Activated CD4-positive, alpha-beta memory T cell treated with anti-CD3 and anti-CD28 coated beads, Interleukin-2, amount 10 ng/mL, durations not matched to agents 7 days and 5 days (primary cell): ENCODE measurements at regions of chr6 and their contacts with region 1.

Region 1: DNA sequence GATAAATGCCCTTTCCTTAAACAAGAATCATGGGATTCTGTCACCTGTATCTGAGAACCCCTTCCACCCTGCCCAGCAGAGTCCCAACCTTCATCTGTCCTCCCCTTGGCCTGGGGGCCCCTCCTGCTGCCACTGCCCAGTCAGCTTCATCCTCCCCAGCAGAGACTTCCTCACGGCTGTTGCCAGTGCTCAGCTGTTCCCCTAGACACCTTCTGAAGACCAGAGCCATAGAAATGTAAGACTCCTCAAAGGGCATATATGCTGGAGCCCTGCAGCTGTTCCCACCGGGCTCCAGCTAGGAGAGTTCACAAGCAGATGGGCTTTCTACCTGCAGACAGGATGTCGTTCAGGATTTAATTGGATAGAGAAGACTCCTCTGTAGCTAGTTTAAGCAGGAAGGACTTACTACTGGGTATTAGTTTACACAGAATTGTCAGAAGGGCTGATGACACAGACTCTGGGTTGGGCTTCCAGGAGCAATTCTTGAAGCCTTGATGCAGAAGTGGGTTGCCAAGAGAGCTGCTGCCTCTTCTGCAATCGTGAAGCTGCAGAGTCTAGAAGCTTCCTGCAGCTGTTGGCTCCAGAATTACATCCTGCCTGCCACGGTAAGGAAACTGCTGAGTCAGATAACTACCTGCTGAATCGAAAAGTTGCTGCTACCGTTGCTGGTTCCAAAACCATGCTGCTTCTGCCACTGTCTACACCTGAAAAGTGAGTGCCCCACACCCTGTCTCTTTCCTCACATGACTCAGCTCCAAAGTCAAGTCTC is 57.1 kb upstream of the MLN start:
- DNase-seq: peak; percentile 71
- H3K4me3 Mint-ChIP-seq: no peak overlapping the region
- H3K27ac Mint-ChIP-seq: peak overlapping the region; percentile 80
- H3K4me1 Mint-ChIP-seq: peaks cover 73% of the 10 kb centered on the region
- H3K27me3 Mint-ChIP-seq: peaks cover 36% of the 10 kb centered on the region

Region 2: DNA sequence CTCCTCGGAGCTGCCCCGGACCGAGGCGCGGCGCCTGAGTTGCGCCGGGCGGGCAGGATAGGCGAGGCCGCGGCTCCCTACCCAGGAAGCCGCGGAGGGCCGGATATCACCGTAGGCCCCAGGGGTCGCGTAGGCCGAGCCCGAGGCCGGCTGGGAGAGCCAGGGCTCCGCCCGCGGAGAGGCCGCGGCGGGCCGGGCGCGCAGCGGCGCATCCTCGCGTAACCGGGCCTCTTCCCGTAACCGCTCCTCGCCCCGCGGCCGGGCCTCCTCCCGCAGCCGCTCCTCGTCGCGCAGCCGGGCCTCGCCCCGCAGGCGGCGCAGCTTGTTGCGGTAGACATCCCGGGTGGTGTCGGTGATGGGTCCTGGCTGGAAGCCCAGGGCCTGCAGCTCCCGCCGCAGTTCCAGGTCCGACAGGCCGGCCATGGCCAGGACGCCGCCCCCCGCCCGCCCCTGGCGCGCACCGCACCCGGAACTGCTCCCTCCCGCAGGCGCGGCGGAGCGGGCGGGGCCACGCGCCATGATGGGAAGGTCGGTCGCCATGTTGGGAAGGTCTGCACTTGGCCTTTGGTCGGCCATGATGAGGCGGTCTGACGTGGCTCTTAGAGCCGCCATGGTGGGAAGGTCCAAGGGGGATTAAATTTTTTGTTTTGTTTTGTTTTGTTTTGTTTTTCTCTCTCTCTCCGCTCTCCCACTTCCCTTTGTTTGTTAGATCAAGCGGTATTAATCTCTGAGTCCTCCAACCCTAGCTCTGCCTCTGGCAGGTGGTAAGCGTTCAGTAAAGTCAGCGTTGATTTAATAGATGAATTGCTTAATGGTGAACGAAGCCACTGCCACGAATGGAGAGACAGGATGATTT is 72.0 kb before region 1 on chr6 and contains the start of gene LEMD2:
- CTCF ChIA-PET with region 1: no interaction called
- POLR2A ChIA-PET with region 1: interaction called, 22 read pairs
- DNase-seq: peak; percentile 93
- H3K4me3 Mint-ChIP-seq: peak within 1 kb of the TSS; percentile 96
- H3K27ac Mint-ChIP-seq: peak within 1 kb of the TSS; percentile 98
- H3K4me1 Mint-ChIP-seq: peaks cover 49% of the 10 kb centered on the region
- H3K27me3 Mint-ChIP-seq: peaks cover 19% of the 10 kb centered on the region
- total RNA-seq, gene LEMD2: 70.6 to 76.1 TPM

Region 3: DNA sequence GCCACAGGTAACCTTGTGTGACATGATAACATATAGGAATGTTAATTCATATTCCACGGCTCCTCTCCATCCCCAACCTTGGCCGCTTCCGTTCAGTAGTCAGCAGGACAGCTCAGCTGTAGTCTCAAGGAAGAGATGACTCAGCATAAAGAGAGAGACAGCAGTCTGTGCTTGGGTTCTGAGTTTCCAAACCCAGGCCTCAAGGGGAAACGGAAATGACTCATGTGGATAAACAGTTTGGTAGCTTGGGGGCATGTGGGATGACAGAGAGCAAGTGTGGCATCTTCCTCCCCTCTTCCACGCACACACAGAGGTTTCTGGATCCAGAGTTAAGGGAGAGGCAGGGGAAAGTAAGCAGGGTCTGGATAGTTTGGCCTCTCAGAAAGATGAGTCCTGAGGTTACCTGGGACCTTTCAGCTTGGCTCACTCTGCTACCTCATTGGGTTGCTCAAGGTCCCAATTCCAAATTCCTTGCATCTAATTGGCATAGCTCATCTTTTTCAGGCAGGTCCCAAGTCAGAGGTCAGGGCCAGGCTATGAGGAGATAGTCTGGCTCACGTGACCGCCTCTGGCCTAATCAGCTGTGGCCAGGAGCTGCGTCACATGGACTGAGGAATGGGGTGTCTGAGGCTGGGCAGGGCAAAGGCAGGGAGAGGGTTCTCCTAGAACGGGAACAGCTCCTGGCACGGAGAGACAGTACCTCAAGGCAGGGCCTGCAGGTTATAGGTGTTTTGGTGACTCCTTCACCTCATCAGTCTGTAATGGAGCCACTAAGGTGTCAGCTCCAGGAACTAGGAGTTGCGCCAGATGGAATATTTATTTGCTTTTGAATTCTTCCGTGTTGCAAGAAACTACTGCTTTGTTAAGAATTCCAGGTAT is 20.6 kb before region 1 on chr6:
- CTCF ChIA-PET with region 1: interaction called, 10 read pairs
- POLR2A ChIA-PET with region 1: interaction called, 20 read pairs
- DNase-seq: peak; percentile 68
- H3K4me3 Mint-ChIP-seq: no peak overlapping the region
- H3K27ac Mint-ChIP-seq: peak overlapping the region; percentile 32
- H3K4me1 Mint-ChIP-seq: peaks cover 24% of the 10 kb centered on the region
- H3K27me3 Mint-ChIP-seq: peaks cover 20% of the 10 kb centered on the region

Region 4: DNA sequence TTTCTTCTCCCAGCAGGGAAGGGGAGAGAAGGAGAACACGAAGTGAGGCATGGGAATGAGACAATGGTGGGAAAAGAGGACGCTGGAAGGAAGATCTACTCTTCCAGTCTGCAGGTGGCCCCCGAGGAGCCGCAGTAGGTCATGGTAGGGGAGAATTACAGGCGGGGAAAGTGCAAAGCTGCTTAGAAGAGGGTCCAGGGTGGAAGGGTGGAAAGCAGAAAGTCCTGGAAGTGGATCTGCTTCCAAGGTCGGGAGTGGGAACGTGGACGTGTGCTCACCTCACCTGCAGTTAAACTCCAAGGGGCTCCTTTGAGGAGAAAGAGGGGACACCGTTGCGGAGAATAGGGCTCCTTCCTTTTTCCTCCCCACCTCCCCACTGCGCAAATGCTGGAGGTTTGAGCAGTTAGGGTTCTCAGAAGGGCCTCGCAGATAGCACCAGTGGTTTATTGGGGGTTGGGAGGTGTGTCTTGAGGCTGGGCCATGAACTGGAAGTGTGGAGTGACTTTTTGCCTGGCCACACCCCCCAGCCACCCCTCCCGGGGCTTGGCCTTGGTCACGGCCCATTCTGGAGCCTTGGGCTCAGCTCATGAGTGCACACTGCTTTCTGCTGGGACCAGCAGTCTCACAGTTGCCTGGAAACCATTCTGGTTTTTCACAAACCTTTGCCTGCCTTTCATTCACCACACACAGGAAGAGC is 43.3 kb after region 1 on chr6:
- CTCF ChIA-PET with region 1: interaction called, 6 read pairs
- POLR2A ChIA-PET with region 1: interaction called, 34 read pairs
- DNase-seq: peak; percentile 95
- H3K4me3 Mint-ChIP-seq: peak overlapping the region; percentile 73
- H3K27ac Mint-ChIP-seq: peak overlapping the region; percentile 99
- H3K4me1 Mint-ChIP-seq: peaks cover 62% of the 10 kb centered on the region
- H3K27me3 Mint-ChIP-seq: peaks cover 11% of the 10 kb centered on the region

Region 5: GRCh38 chr6:34027445-34027936 is 166.6 kb after region 1 on chr6:
- CTCF ChIA-PET with region 1: interaction called, 18 read pairs
- POLR2A ChIA-PET with region 1: no interaction called
- DNase-seq: peak; percentile 70
- H3K4me3 Mint-ChIP-seq: no peak overlapping the region
- H3K27ac Mint-ChIP-seq: no peak overlapping the region
- H3K4me1 Mint-ChIP-seq: no peaks in the 10 kb centered on the region
- H3K27me3 Mint-ChIP-seq: peaks cover 2% of the 10 kb centered on the region